ENCODE measurements at regions of chr1 and their contacts with region 1.

Region 1: DNA sequence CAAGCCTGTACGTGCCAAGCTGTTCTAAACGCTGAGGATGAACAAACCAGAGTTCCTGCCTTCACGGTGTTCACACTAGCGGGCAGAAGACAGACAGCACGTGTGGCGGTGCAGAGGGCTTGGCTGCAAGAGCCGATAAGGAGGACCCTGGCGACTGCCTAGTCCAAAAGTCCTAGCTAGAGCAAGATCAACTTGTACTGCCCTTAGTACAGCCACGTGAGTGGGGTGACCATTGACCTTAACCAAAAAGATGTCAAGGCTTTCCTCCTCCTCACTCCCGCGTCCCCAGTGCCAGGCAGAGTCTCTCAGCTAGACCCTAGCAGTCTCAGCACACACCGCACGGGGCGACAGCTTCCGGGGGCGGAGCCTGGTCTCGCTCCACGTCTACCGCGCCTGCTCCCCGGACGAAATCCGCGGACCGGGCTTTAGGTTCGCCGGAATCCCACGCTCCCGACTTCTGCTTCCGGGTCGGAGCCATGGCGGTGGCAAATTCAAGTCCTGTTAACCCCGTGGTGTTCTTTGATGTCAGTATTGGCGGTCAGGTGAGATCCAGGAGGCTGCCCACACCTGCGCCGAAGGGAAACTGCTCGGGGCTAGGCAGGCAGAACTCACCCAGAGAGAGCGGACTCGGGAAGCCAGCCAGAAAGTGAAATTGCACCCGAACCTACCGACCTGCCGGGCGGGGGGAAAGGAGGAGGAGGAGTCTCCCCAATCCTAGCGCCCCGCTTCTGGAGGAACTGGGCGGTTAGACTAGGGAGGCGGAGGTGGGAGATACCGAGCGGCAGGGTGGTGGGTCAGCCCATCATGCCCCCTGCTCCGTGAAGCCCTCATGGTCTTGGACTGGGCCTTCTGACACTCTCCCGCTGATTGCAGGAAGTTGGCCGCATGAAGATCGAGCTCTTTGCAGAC is at the start of gene PPIH:
- DNase-seq: peak; percentile 96

Region 2: DNA sequence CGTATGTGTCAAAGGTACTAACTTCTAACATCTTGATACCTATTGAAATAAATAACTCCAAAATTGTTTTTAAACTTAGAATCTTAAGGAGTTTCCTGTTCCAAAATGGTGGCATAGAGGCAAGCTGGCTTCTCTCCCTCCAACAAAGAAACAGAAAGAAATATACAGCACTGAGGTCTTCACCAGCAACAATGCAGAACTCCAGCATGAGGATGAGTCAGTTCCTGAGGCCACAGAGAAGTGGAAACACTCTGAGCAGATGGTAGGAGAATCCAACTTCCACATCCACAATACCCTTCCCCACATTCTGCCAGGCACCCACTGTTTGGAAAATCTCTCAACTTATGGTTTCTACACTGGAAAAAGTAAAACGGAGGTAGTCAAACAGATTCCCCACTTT is 12.2 kb before region 1 on chr1:
- CTCF ChIA-PET with region 1: interaction called, 3 read pairs
- POLR2A ChIA-PET with region 1: interaction called, 10 read pairs
- DNase-seq: no peak

Region 3: DNA sequence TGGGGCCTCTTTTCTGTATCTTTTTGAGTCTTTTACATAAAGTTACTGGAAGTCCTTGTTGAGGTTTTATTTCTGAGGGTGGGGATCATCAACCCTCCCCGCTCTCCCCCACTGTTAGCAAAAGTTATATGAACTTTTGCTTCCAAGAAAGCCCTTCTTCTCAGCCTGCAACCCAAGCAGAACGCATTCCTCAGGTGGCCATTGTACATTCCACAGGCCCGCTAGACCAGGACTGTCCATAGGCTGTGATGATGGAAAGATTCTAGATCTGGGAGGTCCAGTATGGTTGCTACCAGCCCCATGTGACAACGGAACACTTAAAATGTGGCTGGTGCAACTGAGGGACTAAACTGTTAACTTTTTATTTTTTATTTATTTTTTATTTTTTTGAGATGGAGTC is 12.2 kb after region 1 on chr1:
- CTCF ChIA-PET with region 1: no interaction called
- POLR2A ChIA-PET with region 1: interaction called, 15 read pairs
- DNase-seq: no peak

Region 4: DNA sequence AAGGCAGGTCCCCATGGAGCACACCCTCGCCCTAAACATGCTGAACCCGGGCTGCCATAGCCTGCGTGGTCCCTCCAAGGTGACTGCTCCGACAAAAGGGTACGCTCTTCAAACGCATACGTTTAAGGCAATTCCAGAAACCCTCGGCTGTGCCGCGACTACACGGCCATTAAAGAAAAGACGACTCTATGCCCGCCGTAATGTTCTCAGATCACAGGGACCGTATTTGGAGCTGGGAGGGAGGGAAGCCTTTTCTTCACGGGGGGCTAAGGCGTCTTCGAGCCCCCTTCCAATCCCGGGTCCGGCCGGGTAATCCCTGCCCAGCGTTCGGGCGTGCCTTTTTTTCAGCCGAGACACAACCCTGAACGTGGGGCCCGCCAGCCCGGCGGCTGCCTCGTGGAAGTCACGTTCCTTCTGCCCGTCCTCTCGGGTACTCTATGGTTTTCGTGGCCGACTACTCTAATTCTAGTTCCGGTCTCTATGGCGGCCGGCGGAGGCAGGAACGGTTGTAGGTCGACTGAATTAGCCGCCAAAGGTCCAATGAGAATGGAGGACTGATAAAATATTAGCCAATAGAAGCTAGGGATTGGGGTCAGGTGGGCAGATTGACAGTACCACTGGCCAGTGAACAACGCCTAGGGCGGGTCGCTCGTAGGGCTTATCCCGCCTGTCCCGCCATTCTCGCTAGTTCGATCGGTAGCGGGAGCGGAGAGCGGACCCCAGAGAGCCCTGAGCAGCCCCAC is 23.7 kb after region 1 on chr1 and contains the start of gene YBX1:
- CTCF ChIA-PET with region 1: no interaction called
- POLR2A ChIA-PET with region 1: interaction called, 32 read pairs
- DNase-seq: peak; percentile 94

Region 5: DNA sequence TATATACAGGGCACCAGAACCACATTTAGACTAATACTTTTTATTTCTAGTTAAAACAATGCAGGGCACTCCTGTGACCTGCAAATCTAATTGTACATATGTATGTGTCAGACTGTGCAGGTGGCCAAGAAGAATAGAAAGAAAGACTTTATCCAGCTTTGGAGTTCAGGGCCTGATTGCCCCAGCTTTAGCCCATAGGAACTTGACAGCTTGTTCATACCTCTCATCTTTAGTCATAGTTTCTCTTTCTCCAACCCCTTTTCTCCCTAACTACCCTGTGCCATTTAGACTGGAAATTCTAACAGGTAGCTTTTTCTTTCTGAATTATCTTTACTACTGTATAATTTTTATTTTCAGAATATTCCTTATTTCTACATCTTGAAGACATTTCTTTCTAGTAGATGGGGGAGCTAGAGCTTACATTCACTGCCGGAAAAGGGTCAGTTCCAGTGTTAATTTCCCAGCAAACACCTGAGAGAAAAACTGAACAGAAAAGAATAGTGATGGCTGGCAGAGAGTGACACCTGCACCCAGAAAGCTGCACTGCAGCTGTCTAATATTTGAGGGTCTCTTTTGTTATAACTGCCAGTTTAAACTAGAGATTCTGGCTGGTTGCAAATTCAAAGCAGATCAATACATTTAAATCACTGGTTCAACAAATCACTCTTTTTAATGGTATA is 32.4 kb after region 1 on chr1:
- CTCF ChIA-PET with region 1: no interaction called
- POLR2A ChIA-PET with region 1: interaction called, 12 read pairs
- DNase-seq: no peak